GM13977 (cell line): ENCODE measurements at regions of chr10 and their contacts with region 1.

Region 1: GRCh38 chr10:96509017-96509641 is 4.6 kb downstream of the TLL2 start:
- DNase-seq: no peak
- CTCF ChIP-seq: no peak

Region 2: GRCh38 chr10:96395931-96396877 is 112.9 kb before region 1 on chr10:
- in situ Hi-C with region 1: loop called (anchors 10 kb)
- DNase-seq: peak; percentile 84
- CTCF ChIP-seq: peak; percentile 91